Colonic mucosa (tissue), 4 donors: ENCODE measurements at regions of chr19 and their contacts with region 1.

Region 1: DNA sequence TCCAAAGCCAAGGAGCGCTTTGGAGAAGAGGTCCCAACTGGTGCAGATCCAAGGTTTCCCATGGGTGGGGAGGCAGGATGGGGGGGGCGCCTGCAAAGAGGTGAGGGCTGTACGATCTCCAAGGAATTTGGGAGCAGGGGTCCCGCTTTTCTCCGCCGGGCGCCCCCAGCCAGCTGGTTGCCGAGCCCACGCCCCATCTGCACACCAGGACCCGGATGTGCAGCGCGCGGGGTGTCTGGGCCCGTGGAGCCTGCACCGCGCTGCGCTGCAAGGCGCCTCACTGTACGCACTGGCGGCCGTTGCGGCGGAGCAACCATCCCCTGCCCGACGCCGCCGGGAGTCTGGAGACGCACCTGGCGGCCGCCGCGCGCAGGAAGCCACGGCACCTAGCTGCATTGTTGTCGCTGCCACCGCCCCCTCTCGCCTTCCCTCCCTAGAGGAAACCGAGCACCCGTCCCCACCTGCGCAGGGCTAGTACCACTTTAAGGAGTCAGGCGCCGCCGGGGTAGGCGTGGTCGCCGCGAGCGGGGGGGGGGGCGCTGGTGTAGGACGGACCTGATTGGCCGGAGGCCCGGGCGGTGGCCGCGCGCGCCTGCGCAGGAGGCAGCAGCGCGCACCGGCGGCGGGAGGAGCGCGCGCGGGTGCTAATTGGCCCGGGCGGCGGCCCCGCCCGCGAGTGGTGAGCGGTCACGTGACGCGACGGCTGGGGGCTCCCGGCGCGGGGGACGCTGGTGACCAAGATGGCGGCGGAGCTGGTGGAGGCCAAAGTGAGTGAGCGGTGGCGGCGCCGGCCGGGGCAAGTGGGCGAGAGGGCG is at the start of gene PIAS4:
- DNase-seq: peak; percentile 96
- H3K4me3 ChIP-seq: peak within 1 kb of the TSS; percentile 97
- H3K27ac ChIP-seq: peak within 1 kb of the TSS; percentile 90
- H3K4me1 ChIP-seq: peaks cover 18% of the 10 kb centered on the region
- H3K27me3 ChIP-seq: no peaks in the 10 kb centered on the region
- CTCF ChIP-seq: no peak
- total RNA-seq, gene PIAS4: 29.9 to 31.5 TPM

Region 2: GRCh38 chr19:4042731-4043082 is 35.5 kb after region 1 on chr19:
- intact Hi-C with region 1: loop called (anchors 5 kb)
- DNase-seq: peak; percentile 62
- H3K4me3 ChIP-seq: no peak overlapping the region
- H3K27ac ChIP-seq: no peak overlapping the region
- H3K4me1 ChIP-seq: no peaks in the 10 kb centered on the region
- H3K27me3 ChIP-seq: no peaks in the 10 kb centered on the region
- CTCF ChIP-seq: no peak